GM12878 (cell line): ENCODE measurements at regions of chr21 and their contacts with region 1.

Region 1: GRCh38 chr21:25421327-25422028 is 185.8 kb downstream of the MRPL39 start:
- DNase-seq: peak; percentile 93
- ATAC-seq: peak; percentile 61
- H3K4me3 ChIP-seq: peak overlapping the region; percentile 59
- H3K27ac ChIP-seq: peak overlapping the region; percentile 97
- H3K4me1 ChIP-seq: peaks cover 27% of the 10 kb centered on the region
- H3K27me3 ChIP-seq: no peaks in the 10 kb centered on the region
- CTCF ChIP-seq: peak; percentile 65 to 84 (median 71); a peak in 4 of 6 replicates
- EP300 ChIP-seq: 0 out of 4 replicates have a peak, but pooled peaks have one; percentile 34 to 58
- POLR2A ChIP-seq: 0 out of 2 replicates have a peak, but pooled peaks have one; percentile 50
- RAD21 ChIP-seq: peak; percentile 88

Region 2: DNA sequence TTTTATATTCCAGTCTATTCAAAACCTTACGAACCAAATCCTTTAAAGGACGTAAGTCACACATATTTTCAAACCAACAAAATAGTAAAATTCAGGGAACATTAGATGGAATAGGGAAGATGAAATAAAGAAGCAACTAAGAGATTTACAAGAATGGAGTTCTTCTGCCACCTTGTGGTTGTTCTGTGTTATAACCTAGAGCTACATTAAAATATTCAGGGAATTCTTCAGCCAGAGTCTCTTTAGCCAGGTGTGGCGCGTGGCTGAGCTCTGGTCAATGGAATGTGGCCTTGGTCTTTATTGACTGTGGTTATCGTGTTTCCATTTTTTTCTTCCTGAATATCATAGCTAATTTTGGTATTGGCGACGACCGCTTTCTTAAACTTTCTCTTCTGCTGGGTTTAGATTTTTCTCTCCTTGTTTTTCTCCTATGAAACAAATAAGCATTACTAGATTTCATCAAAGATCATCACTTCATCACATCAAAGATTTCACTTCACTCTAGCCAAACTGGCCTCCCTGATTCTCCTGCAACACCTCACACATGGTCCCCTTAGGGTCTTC is 35.5 kb before region 1 on chr21:
- CTCF ChIA-PET with region 1: interaction called, 8 read pairs
- POLR2A ChIA-PET with region 1: no interaction called
- RAD21 ChIA-PET with region 1: interaction called, 32 read pairs
- SMC1A ChIA-PET with region 1: interaction called, 8 read pairs
- in situ Hi-C with region 1: no loop called
- intact Hi-C with region 1: no loop called
- DNase-seq: no peak
- ATAC-seq: peak; percentile 54
- H3K4me3 ChIP-seq: no peak overlapping the region
- H3K27ac ChIP-seq: no peak overlapping the region
- H3K4me1 ChIP-seq: peaks cover 11% of the 10 kb centered on the region; the same call in 1 of the 2 replicates
- H3K27me3 ChIP-seq: no peaks in the 10 kb centered on the region
- CTCF ChIP-seq: peak; percentile 58 to 68 (median 66); a peak in 5 of 6 replicates
- EP300 ChIP-seq: no peak
- POLR2A ChIP-seq: no peak
- RAD21 ChIP-seq: peak; percentile 85

Region 3: DNA sequence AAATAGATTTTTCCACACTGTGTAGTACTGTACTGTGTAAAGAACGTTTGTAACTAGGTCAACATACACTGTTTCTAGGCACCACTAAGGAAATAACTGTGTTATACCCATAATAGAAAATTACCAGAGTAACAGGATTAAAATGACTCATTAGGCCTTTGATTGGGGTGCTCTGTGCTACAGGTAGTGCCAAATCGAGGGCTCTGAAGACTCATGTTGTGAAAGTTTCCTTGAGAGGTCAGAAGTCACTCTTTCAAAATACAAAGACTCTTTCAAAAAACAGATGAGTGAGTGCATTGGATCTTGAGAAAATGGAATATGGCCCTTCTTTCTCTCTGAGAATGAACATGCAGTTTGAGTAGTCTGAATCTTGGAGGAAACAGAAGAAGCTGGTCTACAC is 42.8 kb after region 1 on chr21:
- CTCF ChIA-PET with region 1: interaction called, 5 read pairs
- POLR2A ChIA-PET with region 1: interaction called, 51 read pairs
- RAD21 ChIA-PET with region 1: interaction called, 21 read pairs
- SMC1A ChIA-PET with region 1: interaction called, 22 read pairs
- in situ Hi-C with region 1: no loop called
- intact Hi-C with region 1: no loop called
- DNase-seq: no peak
- ATAC-seq: peak; percentile 76
- H3K4me3 ChIP-seq: peak overlapping the region; percentile 22; the same call in 1 of the 2 replicates
- H3K27ac ChIP-seq: peak overlapping the region; percentile 87
- H3K4me1 ChIP-seq: peaks cover 41% of the 10 kb centered on the region
- H3K27me3 ChIP-seq: no peaks in the 10 kb centered on the region
- CTCF ChIP-seq: no peak
- EP300 ChIP-seq: peak; percentile 69 to 94; a peak in 3 of 4 replicates
- POLR2A ChIP-seq: no peak
- RAD21 ChIP-seq: no peak

Region 4: GRCh38 chr21:25507522-25507921 is 86.0 kb after region 1 on chr21:
- CTCF ChIA-PET with region 1: interaction called, 8 read pairs
- POLR2A ChIA-PET with region 1: interaction called, 3 read pairs
- RAD21 ChIA-PET with region 1: interaction called, 37 read pairs
- SMC1A ChIA-PET with region 1: interaction called, 49 read pairs
- in situ Hi-C with region 1: loop called (anchors 5 kb)
- intact Hi-C with region 1: loop called (anchors 1 kb)
- DNase-seq: no peak
- ATAC-seq: peak; percentile 57
- H3K4me3 ChIP-seq: no peak overlapping the region
- H3K27ac ChIP-seq: peak overlapping the region; percentile 95
- H3K4me1 ChIP-seq: peaks cover 41% of the 10 kb centered on the region
- H3K27me3 ChIP-seq: no peaks in the 10 kb centered on the region
- CTCF ChIP-seq: peak; percentile 19 to 52 (median 31); a peak in 4 of 6 replicates
- EP300 ChIP-seq: no peak
- POLR2A ChIP-seq: no peak
- RAD21 ChIP-seq: peak; percentile 60

Region 5: GRCh38 chr21:25568246-25568645 is 146.8 kb after region 1 on chr21:
- CTCF ChIA-PET with region 1: interaction called, 163 read pairs
- POLR2A ChIA-PET with region 1: interaction called, 55 read pairs
- RAD21 ChIA-PET with region 1: interaction called, 253 read pairs
- SMC1A ChIA-PET with region 1: interaction called, 426 read pairs
- in situ Hi-C with region 1: loop called (anchors 5 kb)
- intact Hi-C with region 1: loop called (anchors 1 kb)
- DNase-seq: no peak
- ATAC-seq: peak; percentile 12
- H3K4me3 ChIP-seq: peak overlapping the region; percentile 87
- H3K27ac ChIP-seq: peak overlapping the region; percentile 92
- H3K4me1 ChIP-seq: peaks cover 16% of the 10 kb centered on the region; the same call in 1 of the 2 replicates
- H3K27me3 ChIP-seq: no peaks in the 10 kb centered on the region
- CTCF ChIP-seq: no peak
- EP300 ChIP-seq: no peak
- POLR2A ChIP-seq: peak; percentile 88
- RAD21 ChIP-seq: no peak

Region 6: DNA sequence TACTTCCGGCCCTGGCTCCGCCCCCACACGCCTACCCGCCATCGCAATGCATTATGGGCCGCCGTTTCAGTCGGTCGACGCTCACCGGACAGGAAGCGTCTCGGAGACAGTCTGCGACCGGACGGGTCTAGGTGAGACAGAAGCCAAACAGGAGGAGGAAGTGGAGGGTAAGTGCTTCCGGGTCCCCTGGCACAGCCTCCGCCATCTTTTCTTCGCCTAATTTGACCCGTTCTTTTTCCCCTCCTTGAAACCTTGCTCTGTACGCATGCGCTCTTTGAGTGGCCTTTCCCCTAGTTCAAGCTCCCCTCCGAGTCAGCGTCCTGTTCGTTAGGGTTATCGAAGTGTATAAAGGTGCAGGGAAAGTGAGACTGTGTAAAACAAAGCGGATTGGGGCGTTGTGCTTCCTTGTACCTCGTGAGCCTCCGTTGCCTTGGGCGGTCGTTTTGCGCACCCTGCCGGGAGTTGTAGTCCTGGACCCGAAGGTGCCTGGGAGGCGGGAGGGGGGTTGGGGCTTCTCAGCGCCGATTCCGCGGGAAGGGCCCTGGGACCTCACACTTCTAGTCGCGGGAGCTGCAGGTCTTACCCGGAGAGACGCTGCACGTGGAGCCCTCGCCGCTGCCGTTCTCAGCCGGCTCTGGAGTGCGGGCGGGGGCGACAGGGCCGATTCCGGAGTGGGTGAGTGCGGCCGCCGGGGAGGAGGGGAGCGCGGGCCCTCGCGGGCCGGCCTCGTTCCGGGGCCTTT is 313.6 kb after region 1 on chr21 and contains the starts of genes ATP5PF and GABPA:
- CTCF ChIA-PET with region 1: no interaction called
- POLR2A ChIA-PET with region 1: interaction called, 3 read pairs
- RAD21 ChIA-PET with region 1: interaction called, 3 read pairs
- SMC1A ChIA-PET with region 1: interaction called, 4 read pairs
- in situ Hi-C with region 1: loop called (anchors 10 kb)
- intact Hi-C with region 1: loop called (anchors 5 kb)
- DNase-seq: peak; percentile 97
- ATAC-seq: peak; percentile 90
- H3K4me3 ChIP-seq: peak within 1 kb of the TSS; percentile 98
- H3K27ac ChIP-seq: peak within 1 kb of the TSS; percentile 97
- H3K4me1 ChIP-seq: peaks cover 26% of the 10 kb centered on the region
- H3K27me3 ChIP-seq: no peaks in the 10 kb centered on the region
- CTCF ChIP-seq: no peak
- EP300 ChIP-seq: peak in 1 of 2 experiments; percentile 41; a peak in 1 of 4 replicates
- POLR2A ChIP-seq: peak; percentile 72
- RAD21 ChIP-seq: no peak
- polyA plus RNA-seq, gene ATP5PF: 1,189 to 1,604 TPM
- polyA plus RNA-seq, gene GABPA: 7.6 to 8.4 TPM